Ascending aorta (tissue), 2 donors: ENCODE measurements at regions of chr7 and their contacts with region 1.

Region 1: GRCh38 chr7:84701524-84702306 is 485.1 kb downstream of the SEMA3D start:
- DNase-seq: peak; percentile 12 to 71
- H3K4me3 ChIP-seq: no peak overlapping the region
- H3K27ac ChIP-seq: peak overlapping the region; percentile 55 to 70
- H3K4me1 ChIP-seq: peaks cover 3% of the 10 kb centered on the region in 2 donors
- H3K27me3 ChIP-seq: no peaks in the 10 kb centered on the region
- CTCF ChIP-seq: no peak

Region 2: DNA sequence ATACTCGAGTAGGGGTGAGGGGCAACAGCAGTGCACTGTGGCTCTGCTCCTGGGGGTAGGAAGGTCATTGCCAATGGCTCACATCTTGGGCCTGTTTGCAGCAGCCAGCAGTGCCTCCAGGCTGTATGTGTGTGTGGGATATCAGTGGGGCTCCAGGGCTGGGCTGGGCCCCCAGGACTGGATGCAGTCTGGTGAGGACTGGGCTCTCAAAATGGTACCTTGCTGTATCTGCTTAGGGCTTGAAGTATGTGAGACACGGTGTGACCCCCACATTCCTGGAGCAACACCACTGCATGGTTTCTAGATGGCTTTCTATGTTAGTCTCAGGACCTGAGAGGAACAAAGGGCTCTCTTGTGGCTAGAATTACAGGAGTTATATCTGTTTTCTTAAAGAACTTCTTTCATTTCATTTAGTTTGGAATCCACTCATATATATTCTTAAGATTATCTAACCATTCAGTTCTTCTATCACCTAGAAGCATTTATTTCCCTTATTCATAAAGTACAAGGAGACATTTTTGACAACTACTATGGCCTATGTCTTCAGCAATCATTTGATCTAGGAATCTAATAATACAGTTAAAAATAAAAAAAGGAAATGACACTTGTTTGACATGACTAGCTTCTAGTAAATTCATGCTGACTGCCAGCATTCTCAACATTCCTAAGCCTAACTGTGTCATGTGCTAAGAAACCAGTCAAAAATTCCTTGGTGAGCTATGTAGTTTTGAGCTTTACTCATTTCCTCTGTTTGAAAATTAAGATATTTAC is 64.0 kb before region 1 on chr7:
- intact Hi-C with region 1: loop called (anchors 5 kb)
- DNase-seq: no peak
- H3K4me3 ChIP-seq: no peak overlapping the region
- H3K27ac ChIP-seq: peak overlapping the region; percentile 30 to 43
- H3K4me1 ChIP-seq: peaks cover 0 to 12% of the 10 kb centered on the region in 2 donors
- H3K27me3 ChIP-seq: no peaks in the 10 kb centered on the region
- CTCF ChIP-seq: no peak

Region 3: GRCh38 chr7:84790882-84791281 is 89.2 kb after region 1 on chr7:
- intact Hi-C with region 1: loop called (anchors 5 kb)
- DNase-seq: no peak
- H3K4me3 ChIP-seq: no peak overlapping the region
- H3K27ac ChIP-seq: no peak overlapping the region
- H3K4me1 ChIP-seq: peaks cover 0 to 2% of the 10 kb centered on the region in 2 donors
- H3K27me3 ChIP-seq: no peaks in the 10 kb centered on the region
- CTCF ChIP-seq: no peak